ENCODE measurements at regions of chr12 and their contacts with region 1.

Region 1: DNA sequence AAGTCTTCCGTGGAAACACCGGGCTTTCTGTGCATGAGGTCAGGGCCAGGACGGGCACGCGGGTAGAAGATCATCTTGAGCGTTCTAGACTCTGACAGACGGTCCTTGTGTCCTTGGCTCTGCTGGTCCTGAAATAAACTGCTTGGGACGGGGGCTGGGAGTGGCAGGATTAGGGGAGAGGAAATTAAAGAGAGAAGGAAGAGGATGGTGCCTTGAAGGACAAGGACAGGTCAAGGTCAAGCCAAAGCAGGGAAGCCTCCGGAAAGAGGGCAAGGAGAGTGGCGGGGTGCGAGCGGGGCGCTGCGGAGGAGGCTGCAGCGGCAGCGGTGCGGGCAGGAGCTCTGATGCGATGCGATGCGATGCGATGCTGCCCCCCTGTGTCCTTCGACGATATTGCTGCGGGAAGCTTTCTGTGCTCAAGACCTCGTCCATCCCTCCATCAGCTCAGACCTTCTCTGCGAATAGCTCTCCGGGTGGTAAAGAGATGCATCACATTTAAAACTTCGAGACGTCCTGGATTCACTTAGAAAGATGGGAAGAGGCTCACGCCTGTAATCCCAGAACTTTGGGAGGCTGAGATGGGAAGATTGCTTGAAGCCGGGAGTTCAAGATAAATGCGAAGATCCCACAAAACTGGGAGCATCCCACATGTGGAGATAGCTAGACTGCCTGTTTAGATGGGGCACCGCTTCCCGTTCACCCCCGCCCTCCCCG is 110.1 kb upstream of the TMEM132D start:
- DNase-seq: peak; percentile 85
- H3K4me3 Mint-ChIP-seq: no peak overlapping the region
- H3K27ac Mint-ChIP-seq: no peak overlapping the region
- H3K4me1 Mint-ChIP-seq: no peaks in the 10 kb centered on the region
- H3K27me3 Mint-ChIP-seq: no peaks in the 10 kb centered on the region

Region 2: GRCh38 chr12:128644664-128645296 is 1369.1 kb before region 1 on chr12:
- intact Hi-C with region 1: loop called (anchors 5 kb)
- DNase-seq: peak; percentile 71
- H3K4me3 Mint-ChIP-seq: no peak overlapping the region
- H3K27ac Mint-ChIP-seq: no peak overlapping the region
- H3K4me1 Mint-ChIP-seq: no peaks in the 10 kb centered on the region
- H3K27me3 Mint-ChIP-seq: no peaks in the 10 kb centered on the region

Region 3: GRCh38 chr12:128783129-128783574 is 1230.8 kb before region 1 on chr12:
- intact Hi-C with region 1: loop called (anchors 10 kb)
- DNase-seq: peak; percentile 68
- H3K4me3 Mint-ChIP-seq: peak overlapping the region; percentile 53
- H3K27ac Mint-ChIP-seq: peak overlapping the region; percentile 86
- H3K4me1 Mint-ChIP-seq: peaks cover 6% of the 10 kb centered on the region
- H3K27me3 Mint-ChIP-seq: no peaks in the 10 kb centered on the region

Region 4: GRCh38 chr12:129961091-129961490 is 52.8 kb before region 1 on chr12:
- intact Hi-C with region 1: no loop called
- DNase-seq: no peak
- H3K4me3 Mint-ChIP-seq: no peak overlapping the region
- H3K27ac Mint-ChIP-seq: no peak overlapping the region
- H3K4me1 Mint-ChIP-seq: no peaks in the 10 kb centered on the region
- H3K27me3 Mint-ChIP-seq: no peaks in the 10 kb centered on the region

Region 5: DNA sequence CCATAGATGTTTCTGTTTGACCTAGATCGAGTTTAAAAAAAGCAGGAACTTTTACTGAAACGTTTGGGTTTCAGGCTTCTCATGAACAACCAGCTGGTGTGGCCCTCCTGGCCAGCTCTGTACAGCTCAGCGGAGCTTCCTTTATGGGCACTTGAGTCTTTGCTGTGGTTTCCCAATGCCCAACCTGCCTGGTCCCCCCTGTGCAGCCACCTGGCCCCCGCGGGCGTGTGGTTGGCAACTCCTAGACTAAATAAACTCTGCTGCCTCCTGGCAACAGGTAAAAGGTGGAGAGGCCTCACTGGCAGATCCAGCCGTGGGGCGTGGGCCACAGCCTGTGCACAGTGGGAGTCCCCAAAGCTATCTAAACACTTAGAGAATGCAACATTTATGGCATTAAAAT is 978.5 kb after region 1 on chr12:
- intact Hi-C with region 1: no loop called
- DNase-seq: no peak
- H3K4me3 Mint-ChIP-seq: no peak overlapping the region
- H3K27ac Mint-ChIP-seq: no peak overlapping the region
- H3K4me1 Mint-ChIP-seq: no peaks in the 10 kb centered on the region
- H3K27me3 Mint-ChIP-seq: peaks cover 2% of the 10 kb centered on the region

Measured in activated CD4-positive, alpha-beta T cell treated with anti-CD3 and anti-CD28 coated beads, Interleukin-2, amount 10 ng/mL, durations not matched to agents 24 days and 14 days (primary cell).